Activated CD4-positive, alpha-beta memory T cell treated with anti-CD3 and anti-CD28 coated beads, Interleukin-2, amount 10 ng/mL, durations not matched to agents 7 days and 5 days (primary cell): ENCODE measurements at regions of chr14 and their contacts with region 1.

Region 1: GRCh38 chr14:104677512-104678332 is 11.7 kb upstream of the INF2 start:
- DNase-seq: peak; percentile 71
- H3K4me3 Mint-ChIP-seq: peak overlapping the region; percentile 66
- H3K27ac Mint-ChIP-seq: peak overlapping the region; percentile 58
- H3K4me1 Mint-ChIP-seq: peaks cover 32% of the 10 kb centered on the region
- H3K27me3 Mint-ChIP-seq: peaks cover 16% of the 10 kb centered on the region

Region 2: DNA sequence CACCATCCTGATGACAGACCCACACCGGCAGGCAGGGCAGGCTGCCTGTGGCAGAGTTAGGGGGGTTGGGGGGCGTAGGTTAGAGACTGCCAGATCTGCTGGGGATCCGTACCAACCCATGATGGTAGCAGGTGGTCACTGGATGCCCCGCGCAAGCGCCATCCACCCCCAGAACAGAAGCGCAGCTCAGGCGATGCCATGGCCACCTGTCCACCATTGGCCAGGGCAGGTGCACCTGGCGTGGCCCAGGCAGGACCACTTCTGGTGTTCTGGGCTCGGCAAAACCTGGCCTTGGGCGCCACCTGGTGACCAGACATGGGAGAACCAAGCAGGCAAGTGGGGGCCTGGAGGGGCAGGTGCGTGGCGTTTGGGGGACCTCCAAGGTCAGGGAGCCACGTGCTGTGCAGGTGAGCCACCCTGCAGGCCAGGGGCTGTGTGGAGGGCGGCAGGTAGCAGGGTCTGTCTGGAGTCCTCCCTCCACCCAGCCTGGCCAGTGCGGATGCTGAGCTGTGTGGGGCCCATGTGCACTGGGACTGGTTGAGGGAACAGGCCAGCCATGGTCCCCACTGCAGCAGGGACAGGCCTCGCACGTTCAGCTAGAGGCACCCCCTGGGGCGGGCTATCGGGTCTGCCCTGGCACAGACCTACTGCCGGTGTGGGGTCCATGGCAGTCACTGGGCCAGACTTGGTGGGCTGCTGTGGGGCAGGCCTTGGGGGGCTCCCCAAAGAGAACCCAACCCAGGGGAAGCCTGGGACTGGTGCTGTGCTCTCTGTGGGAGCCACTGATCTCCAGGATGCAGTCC is 1130.9 kb before region 1 on chr14:
- CTCF ChIA-PET with region 1: no interaction called
- POLR2A ChIA-PET with region 1: no interaction called
- DNase-seq: peak; percentile 76
- H3K4me3 Mint-ChIP-seq: no peak overlapping the region
- H3K27ac Mint-ChIP-seq: no peak overlapping the region
- H3K4me1 Mint-ChIP-seq: no peaks in the 10 kb centered on the region
- H3K27me3 Mint-ChIP-seq: no peaks in the 10 kb centered on the region

Region 3: DNA sequence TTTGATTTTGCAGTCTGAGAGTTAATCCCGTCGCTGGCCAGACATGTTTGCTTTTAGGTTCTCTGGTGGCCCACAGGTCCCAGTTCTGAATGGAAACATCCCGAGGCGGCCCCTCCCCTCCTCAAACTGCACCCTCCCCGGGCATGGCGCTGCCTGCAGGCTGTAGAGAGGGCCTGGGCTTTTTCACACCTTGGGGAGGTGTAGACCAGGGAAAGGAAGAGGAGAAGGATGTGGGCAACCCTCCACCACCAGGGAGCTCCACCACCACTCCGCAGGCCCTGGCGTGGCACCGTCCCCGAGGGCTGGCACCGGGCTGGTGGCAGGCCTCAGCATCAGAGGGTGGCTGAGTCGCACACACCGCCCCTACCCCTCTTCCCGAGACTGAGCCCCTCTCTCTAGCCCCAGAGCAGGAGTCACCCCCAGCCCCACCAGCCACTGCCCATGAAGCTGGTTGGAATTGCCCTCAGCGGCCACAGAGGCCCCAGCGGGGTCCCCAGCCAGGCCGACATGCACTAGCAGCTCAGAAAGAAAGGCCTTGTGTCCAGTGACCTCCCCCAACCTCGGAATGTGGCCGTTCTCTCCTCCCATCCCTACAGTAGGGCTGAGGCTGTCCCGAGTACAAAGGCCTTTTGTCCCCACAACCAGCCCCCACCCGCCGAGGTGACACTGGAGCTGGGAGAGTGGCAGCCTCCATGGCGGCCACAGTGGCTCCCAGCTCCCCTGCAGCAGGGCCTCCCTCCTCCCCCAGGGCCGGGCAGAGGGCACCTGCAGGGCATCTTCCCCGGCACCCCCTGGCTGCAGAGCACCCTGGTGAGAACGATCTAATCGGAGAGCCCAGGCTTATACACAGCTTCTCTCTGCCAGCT is 11.8 kb before region 1 on chr14:
- CTCF ChIA-PET with region 1: interaction called, 9 read pairs
- POLR2A ChIA-PET with region 1: interaction called, 24 read pairs
- DNase-seq: peak; percentile 71
- H3K4me3 Mint-ChIP-seq: no peak overlapping the region
- H3K27ac Mint-ChIP-seq: no peak overlapping the region
- H3K4me1 Mint-ChIP-seq: peaks cover 31% of the 10 kb centered on the region
- H3K27me3 Mint-ChIP-seq: peaks cover 39% of the 10 kb centered on the region

Region 4: DNA sequence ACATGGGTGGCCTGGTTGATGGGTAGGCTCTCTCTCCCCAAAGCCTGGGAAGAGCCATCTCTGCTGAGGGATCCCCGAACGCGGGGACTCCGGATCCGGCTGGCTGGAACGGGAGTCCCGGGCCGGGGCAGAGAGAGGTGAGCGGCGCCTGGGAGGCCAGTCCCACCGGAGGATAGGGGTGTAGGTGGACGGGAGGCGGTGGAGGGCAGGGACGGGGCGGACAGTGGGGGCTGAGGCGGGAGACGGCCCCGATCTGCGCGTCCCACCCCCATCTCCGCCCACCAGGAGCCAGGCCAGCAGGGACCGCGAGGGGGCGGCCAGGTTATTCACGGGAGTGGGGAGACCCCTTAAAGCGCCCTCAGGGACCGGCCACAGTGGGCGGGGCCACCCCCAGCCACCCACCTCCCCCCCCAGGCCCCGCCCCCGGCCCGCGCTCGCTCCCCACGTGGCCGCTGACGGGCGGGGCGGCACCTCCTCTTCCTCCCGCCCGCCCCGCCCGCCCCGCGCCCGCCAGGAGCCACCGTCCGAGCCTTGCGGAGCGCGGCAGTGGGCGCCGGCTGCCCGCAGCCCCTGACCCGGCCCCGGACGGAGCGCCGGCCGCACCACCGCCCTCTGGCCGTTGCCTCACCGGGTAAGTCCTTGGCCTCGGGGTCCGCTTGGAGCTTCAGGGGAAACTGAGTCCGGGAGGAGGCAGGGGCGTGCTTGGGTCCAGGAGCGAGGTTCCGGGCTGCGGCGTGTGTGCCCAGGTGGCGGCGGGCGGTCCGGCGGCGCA is 11.6 kb after region 1 on chr14 and contains the start of gene INF2:
- CTCF ChIA-PET with region 1: interaction called, 5 read pairs
- POLR2A ChIA-PET with region 1: interaction called, 26 read pairs
- DNase-seq: peak; percentile 59
- H3K4me3 Mint-ChIP-seq: peak within 1 kb of the TSS; percentile 77
- H3K27ac Mint-ChIP-seq: peak within 1 kb of the TSS; percentile 54
- H3K4me1 Mint-ChIP-seq: peaks cover 69% of the 10 kb centered on the region
- H3K27me3 Mint-ChIP-seq: no peaks in the 10 kb centered on the region
- total RNA-seq, gene INF2: 120 to 132 TPM

Region 5: GRCh38 chr14:104694991-104695659 is 17.4 kb after region 1 on chr14:
- CTCF ChIA-PET with region 1: interaction called, 3 read pairs
- POLR2A ChIA-PET with region 1: interaction called, 26 read pairs
- DNase-seq: peak; percentile 74
- H3K4me3 Mint-ChIP-seq: peak overlapping the region; percentile 63
- H3K27ac Mint-ChIP-seq: peak overlapping the region; percentile 93
- H3K4me1 Mint-ChIP-seq: peaks cover 52% of the 10 kb centered on the region
- H3K27me3 Mint-ChIP-seq: no peaks in the 10 kb centered on the region